GM13976 (cell line): ENCODE measurements at regions of chr9 and their contacts with region 1.

Region 1: GRCh38 chr9:101527066-101527465 is 6.6 kb upstream of the RNF20 start:
- DNase-seq: no peak
- CTCF ChIP-seq: no peak

Region 2: DNA sequence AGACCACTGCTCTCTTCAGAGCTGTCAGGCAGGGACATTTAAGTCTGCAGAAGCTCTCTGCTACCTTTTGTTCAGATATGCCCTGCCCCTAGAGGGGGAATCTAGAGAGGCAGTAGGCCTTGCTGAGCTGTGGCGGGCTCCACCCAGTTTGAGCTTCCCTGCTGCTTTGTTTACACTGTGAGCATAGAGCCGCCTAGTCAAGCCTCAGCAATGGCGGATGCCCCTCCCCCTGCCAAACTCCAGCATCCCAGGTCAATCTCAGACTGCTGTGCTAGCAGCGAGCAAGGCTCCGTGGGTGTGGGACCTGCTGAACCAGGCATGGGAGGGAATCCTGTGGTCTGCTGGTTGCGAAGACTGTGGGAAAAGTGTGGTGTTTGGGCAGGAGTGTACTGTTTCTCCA is 889.3 kb before region 1 on chr9:
- in situ Hi-C with region 1: no loop called
- DNase-seq: no peak
- CTCF ChIP-seq: no peak

Region 3: GRCh38 chr9:101418518-101419430 is 108.3 kb before region 1 on chr9:
- in situ Hi-C with region 1: no loop called
- DNase-seq: no peak
- CTCF ChIP-seq: no peak

Region 4: DNA sequence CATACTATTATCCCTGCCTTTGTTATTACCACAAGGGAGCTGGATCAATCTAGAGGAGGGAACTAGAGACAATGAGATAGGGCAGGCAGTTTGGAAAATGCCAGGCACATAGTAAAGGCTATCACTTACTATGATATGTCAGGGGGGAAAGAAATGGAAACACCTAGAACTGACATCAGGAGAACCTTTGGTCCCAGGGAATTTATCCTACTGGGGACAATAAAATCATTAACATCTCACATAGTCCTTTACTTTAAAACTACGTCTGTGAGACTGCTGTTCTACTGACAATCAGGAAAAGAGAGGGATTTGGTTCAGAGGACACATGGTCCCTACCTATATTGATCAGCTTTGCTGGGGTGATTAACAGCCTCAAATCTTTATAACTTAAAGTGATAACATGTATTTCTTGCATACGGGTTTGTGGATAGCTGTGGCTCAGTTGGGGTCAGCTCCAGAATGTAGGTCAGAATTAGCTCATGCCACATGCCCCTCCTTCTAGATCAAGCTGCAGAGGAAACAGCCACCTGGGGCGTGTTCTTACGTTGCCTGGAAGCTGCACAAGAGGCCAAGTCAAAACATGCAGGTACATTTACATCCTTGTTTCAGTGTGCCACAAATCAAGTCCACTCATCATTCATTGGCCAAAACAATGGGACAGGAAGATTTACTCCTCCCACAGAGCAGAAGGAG is 47.6 kb before region 1 on chr9:
- in situ Hi-C with region 1: loop called (anchors 5 kb)
- DNase-seq: no peak
- CTCF ChIP-seq: no peak

Region 5: GRCh38 chr9:101628173-101628572 is 101.1 kb after region 1 on chr9:
- in situ Hi-C with region 1: no loop called
- DNase-seq: no peak
- CTCF ChIP-seq: no peak

Region 6: GRCh38 chr9:101683236-101683635 is 156.2 kb after region 1 on chr9:
- in situ Hi-C with region 1: no loop called
- DNase-seq: no peak
- CTCF ChIP-seq: no peak